Ovary (tissue), 10 donors: ENCODE measurements at regions of chr4 and their contacts with region 1.

Region 1: DNA sequence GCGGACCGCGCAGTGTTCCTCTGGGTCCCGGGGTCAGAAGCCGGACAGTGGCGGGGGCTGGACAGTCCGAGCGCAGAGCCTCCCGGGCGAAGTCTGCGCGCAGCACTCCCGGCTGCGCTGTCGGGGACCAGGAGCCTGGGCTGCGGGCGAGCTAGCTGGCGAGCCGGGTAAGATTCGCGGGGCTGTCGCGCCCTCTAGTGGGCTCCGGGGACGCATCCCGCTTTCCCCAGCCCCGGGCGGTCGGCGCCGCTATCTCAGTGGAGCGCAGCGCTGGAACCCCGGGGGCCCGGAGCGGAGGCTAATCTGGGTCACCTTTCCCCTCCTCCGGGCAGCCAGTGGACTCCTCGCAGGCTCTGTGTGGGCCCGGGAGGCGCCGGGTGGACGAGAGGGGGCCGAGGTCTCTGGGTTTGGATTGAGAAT is 4.2 kb downstream of the PDGFRA start:
- DNase-seq: peak; percentile 80 to 93 (median 91)
- H3K4me3 ChIP-seq: peak overlapping the region; percentile 68
- H3K27ac ChIP-seq: peak overlapping the region; percentile 81 to 82
- H3K4me1 ChIP-seq: peaks cover 6% of the 10 kb centered on the region
- H3K27me3 ChIP-seq: no peaks in the 10 kb centered on the region
- CTCF ChIP-seq: peak; percentile 76 to 88 (median 80)
- EP300 ChIP-seq: no peak
- POLR2A ChIP-seq: no peak

Region 2: DNA sequence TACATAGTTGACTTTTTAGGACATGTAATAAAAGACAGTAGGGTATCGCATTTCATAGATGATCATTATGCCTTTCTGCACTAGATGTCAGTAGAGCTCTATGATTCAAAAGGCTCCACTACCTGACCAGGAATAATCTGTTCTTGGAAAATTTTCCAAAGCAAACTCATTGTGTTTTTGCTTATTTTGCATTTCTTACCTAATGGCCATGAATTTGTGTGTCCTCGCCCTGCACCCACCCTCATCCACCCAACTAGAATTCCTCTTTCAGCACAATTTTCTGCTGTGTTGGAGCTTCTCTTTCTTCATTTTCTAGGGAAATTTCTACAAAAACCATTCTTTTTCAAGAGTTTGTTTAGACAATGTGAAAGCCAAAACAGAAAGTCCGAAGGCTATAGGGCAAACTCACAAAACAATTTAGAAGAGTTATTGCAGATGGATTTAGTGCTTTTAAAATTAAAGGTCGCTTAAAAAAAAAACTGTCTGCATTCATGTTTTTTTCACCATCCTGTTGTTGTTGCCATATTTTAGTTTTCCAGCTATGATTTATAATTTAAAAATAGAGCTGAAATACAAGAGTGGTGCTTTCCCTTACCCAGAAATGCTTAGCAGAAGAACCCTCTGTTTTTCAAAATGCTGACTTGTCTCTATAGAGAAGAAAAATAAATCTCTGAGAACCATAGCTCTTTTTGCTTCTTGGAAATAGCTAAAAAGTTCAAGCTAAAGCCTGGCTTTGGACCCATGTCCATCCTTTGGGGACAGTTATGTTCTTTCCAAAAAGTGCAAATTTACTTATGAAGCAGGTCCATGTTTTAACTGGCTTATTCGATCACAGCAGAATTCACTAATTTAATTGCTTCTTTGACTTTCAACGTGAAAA is 1998.5 kb before region 1 on chr4:
- intact Hi-C with region 1: loop called in 1 of 4 experiments (anchors 10 kb)
- DNase-seq: peak; percentile 50 to 71 (median 62)
- H3K4me3 ChIP-seq: peak overlapping the region; percentile 15
- H3K27ac ChIP-seq: peak overlapping the region in 1 of 2 donors; percentile 29
- H3K4me1 ChIP-seq: no peaks in the 10 kb centered on the region
- H3K27me3 ChIP-seq: no peaks in the 10 kb centered on the region
- CTCF ChIP-seq: peak; percentile 32 to 71 (median 71)
- EP300 ChIP-seq: no peak
- POLR2A ChIP-seq: no peak

Region 3: GRCh38 chr4:52996261-52996892 is 1236.9 kb before region 1 on chr4:
- intact Hi-C with region 1: loop called in 2 of 4 experiments (anchors 5 kb)
- DNase-seq: peak; percentile 41 to 80 (median 76)
- H3K4me3 ChIP-seq: no peak overlapping the region
- H3K27ac ChIP-seq: peak overlapping the region; percentile 63
- H3K4me1 ChIP-seq: peaks cover 37% of the 10 kb centered on the region
- H3K27me3 ChIP-seq: no peaks in the 10 kb centered on the region
- CTCF ChIP-seq: no peak
- EP300 ChIP-seq: peak; percentile 93
- POLR2A ChIP-seq: peak; percentile 35

Region 4: GRCh38 chr4:53497487-53498244 is 735.6 kb before region 1 on chr4:
- intact Hi-C with region 1: loop called in 1 of 4 experiments (anchors 5 kb)
- DNase-seq: peak; percentile 48 to 79 (median 74)
- H3K4me3 ChIP-seq: no peak overlapping the region
- H3K27ac ChIP-seq: peak overlapping the region in 1 of 2 donors; percentile 79
- H3K4me1 ChIP-seq: peaks cover 22% of the 10 kb centered on the region
- H3K27me3 ChIP-seq: no peaks in the 10 kb centered on the region
- CTCF ChIP-seq: no peak
- EP300 ChIP-seq: no peak
- POLR2A ChIP-seq: no peak

Region 5: GRCh38 chr4:54064295-54065111 is 168.8 kb before region 1 on chr4 and contains the start of gene CHIC2:
- intact Hi-C with region 1: loop called in 2 of 4 experiments (anchors 10 kb)
- DNase-seq: peak; percentile 95 to 97 (median 96)
- H3K4me3 ChIP-seq: peak within 1 kb of the TSS; percentile 96
- H3K27ac ChIP-seq: peak within 1 kb of the TSS; percentile 67 to 83
- H3K4me1 ChIP-seq: peaks cover 2% of the 10 kb centered on the region
- H3K27me3 ChIP-seq: no peaks in the 10 kb centered on the region
- CTCF ChIP-seq: peak in 1 of 3 donors; percentile 9
- EP300 ChIP-seq: peak; percentile 43
- POLR2A ChIP-seq: peak; percentile 95
- total RNA-seq, gene CHIC2: 15.9 to 37.6 (median 18.3) TPM